K562 (cell line): ENCODE measurements at regions of chr13 and their contacts with region 1.

Region 1: DNA sequence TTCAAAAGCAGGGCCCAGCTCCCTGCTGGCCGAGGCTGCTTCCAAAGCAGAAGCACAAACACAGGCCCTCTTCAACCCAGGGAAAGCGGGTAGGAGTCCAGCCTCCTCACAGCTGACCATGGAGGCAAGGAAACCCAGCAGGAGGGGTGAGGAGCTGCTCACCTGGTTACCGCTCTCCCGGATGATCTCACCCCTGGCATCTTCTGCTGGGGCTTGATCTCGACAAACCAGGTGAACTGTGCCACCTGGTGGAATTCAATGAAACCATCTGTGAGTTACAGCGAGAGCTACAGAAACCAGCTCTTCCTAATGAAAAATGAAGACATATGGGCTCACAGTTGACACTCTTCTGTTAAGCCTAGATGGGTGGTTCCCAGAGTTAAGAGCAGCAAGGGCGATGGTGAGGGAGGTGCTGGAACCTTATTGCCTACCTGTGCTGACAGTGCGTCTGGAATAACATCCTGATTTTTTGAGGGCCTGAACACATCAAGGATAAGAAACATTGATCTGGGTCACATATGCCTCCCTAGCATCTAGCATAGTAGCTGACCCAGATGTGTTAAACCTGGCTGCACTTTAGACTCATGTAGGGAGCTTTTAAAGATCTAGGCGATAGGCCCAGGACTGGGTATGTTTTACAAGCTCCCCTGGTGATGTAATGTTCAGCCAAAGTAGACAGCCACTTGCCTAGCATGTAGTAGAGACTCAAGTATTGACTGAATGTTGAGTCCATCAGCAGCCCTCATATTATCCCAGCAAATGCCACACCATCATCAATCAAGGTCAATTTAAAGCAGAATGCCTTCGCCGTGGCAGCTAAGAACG is 6.1 kb downstream of the DHRS12 start:
- DNase-seq: peak in 2 of 4 experiments; percentile 26 to 62
- ATAC-seq: peak; percentile 75
- H3K4me3 ChIP-seq: no peak overlapping the region
- H3K27ac ChIP-seq: no peak overlapping the region
- H3K4me1 ChIP-seq: peaks cover 15% of the 10 kb centered on the region in 2 experiments; a peak in 4 of 5 replicates
- H3K27me3 ChIP-seq: peaks cover 0 to 5% of the 10 kb centered on the region in 2 experiments; a peak in 2 of 5 replicates
- CTCF ChIP-seq: peak; percentile 41 to 64 (median 48); a peak in 5 of 6 replicates
- EP300 ChIP-seq: no peak
- POLR2A ChIP-seq: no peak
- RAD21 ChIP-seq: peak; percentile 37 to 77; a peak in 3 of 4 replicates

Region 2: GRCh38 chr13:50713523-50714248 is 1084.2 kb before region 1 on chr13:
- CTCF ChIA-PET with region 1: no interaction called
- POLR2A ChIA-PET with region 1: no interaction called
- in situ Hi-C with region 1: no loop called
- intact Hi-C with region 1: no loop called
- DNase-seq: no peak
- ATAC-seq: no peak
- H3K4me3 ChIP-seq: no peak overlapping the region
- H3K27ac ChIP-seq: no peak overlapping the region
- H3K4me1 ChIP-seq: no peaks in the 10 kb centered on the region
- H3K27me3 ChIP-seq: peaks cover 0 to 17% of the 10 kb centered on the region in 2 experiments; a peak in 2 of 5 replicates
- CTCF ChIP-seq: no peak
- EP300 ChIP-seq: no peak
- POLR2A ChIP-seq: no peak
- RAD21 ChIP-seq: no peak

Region 3: DNA sequence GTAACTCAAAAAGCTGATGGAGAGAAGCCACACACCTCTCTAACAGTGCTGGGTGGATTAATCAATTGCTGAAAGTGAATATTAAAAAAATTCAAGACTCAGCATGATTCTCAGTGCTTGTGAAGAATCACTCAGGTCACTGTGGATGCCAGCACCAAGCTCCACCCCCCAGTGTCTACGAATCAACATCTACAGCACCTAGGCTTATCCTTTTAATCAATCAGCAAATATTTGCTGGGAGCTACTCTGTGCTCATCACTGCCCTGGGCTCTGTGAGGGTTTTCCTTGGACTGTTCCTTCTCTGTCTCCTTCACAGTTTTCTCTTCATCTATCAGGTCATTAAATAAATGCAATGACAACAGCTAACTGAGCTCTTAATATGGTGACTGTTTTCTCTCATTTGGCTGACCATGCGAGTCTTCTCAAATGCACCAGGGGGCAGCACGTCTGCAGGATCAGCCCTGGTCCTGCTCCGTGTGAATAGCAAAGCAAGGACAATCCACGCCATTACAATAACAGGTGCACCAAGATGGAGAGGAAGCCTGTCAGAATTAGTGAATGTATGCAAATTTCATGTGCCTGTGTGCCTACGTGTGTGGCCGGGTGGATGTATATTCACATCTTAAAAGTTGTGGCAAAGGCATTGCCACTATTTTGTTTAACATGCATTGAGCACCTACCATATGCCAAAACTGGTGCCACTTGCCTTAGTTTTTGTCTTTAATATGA is 672.2 kb before region 1 on chr13:
- CTCF ChIA-PET with region 1: no interaction called
- POLR2A ChIA-PET with region 1: no interaction called
- in situ Hi-C with region 1: loop called (anchors 10 kb)
- intact Hi-C with region 1: no loop called
- DNase-seq: peak; percentile 23 to 55 (median 34)
- ATAC-seq: peak; percentile 91
- H3K4me3 ChIP-seq: no peak overlapping the region
- H3K27ac ChIP-seq: no peak overlapping the region
- H3K4me1 ChIP-seq: no peaks in the 10 kb centered on the region
- H3K27me3 ChIP-seq: no peaks in the 10 kb centered on the region
- CTCF ChIP-seq: peak; percentile 70 to 73 (median 71)
- EP300 ChIP-seq: no peak
- POLR2A ChIP-seq: no peak
- RAD21 ChIP-seq: peak; percentile 67 to 81

Region 4: DNA sequence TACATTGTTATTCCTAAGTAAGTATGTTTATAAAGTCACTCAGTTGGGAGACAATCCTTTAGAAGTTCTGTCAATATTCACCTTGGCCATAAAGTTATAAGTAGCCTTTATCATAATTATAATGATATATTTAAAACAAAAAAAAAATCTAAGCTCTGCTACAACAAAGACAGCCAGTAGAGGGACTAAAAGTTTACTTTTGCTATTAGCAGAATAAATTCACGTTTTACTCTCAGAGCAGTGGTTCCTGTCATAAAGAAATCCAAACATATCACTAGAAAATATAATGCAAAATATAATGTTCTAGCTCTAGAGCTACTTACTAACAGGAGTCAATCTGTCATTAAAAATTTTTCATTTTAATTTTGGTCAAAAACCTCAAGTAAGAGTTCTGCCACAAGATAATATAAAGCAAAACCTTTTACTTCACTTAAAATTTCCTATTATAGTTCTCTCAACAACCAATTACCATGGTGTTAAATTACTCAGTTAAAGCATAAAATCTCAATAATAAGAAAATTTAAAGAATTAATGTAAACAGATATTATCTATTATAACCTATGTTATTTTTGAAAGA is 362.8 kb before region 1 on chr13:
- CTCF ChIA-PET with region 1: interaction called, 10 read pairs
- POLR2A ChIA-PET with region 1: interaction called, 3 read pairs
- in situ Hi-C with region 1: loop called (anchors 10 kb)
- intact Hi-C with region 1: loop called (anchors 5 kb)
- DNase-seq: no peak
- ATAC-seq: no peak
- H3K4me3 ChIP-seq: no peak overlapping the region
- H3K27ac ChIP-seq: no peak overlapping the region
- H3K4me1 ChIP-seq: no peaks in the 10 kb centered on the region; a peak in 1 of 5 replicates
- H3K27me3 ChIP-seq: no peaks in the 10 kb centered on the region
- CTCF ChIP-seq: peak in 2 of 3 experiments; percentile 20 to 58; a peak in 3 of 6 replicates
- EP300 ChIP-seq: no peak
- POLR2A ChIP-seq: no peak
- RAD21 ChIP-seq: peak; percentile 28 to 55; a peak in 2 of 4 replicates

Region 5: DNA sequence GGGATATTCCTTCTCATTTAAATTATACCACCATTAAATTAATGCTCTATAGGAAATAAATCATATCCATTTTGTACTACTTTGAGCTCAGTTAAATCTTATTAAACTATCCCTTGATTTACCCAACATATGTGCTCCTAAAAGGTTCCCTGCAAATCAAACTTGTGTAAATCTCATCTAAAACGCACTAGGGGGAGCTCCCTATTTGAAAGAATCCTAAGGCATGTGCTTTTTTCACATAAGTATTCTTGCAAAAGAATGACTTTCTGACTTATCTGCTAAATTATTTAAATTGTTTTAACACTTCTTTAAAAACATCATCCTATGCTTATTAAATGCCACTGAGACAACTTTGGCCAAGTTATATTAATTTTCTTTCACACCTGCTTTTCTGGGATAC is 353.0 kb before region 1 on chr13:
- CTCF ChIA-PET with region 1: no interaction called
- POLR2A ChIA-PET with region 1: interaction called, 5 read pairs
- in situ Hi-C with region 1: loop called (anchors 10 kb)
- intact Hi-C with region 1: loop called (anchors 2 kb)
- DNase-seq: peak in 1 of 4 experiments; percentile 4
- ATAC-seq: 0 out of 3 replicates have a peak, but pooled peaks have one; percentile 35
- H3K4me3 ChIP-seq: no peak overlapping the region
- H3K27ac ChIP-seq: no peak overlapping the region
- H3K4me1 ChIP-seq: peaks cover 0 to 7% of the 10 kb centered on the region in 2 experiments; a peak in 3 of 5 replicates
- H3K27me3 ChIP-seq: no peaks in the 10 kb centered on the region
- CTCF ChIP-seq: peak in 1 of 3 experiments; percentile 45; a peak in 2 of 6 replicates
- EP300 ChIP-seq: no peak
- POLR2A ChIP-seq: no peak
- RAD21 ChIP-seq: peak; percentile 24 to 55; a peak in 3 of 4 replicates

Region 6: GRCh38 chr13:51645154-51645650 is 152.7 kb before region 1 on chr13:
- CTCF ChIA-PET with region 1: no interaction called
- POLR2A ChIA-PET with region 1: no interaction called
- in situ Hi-C with region 1: no loop called
- intact Hi-C with region 1: no loop called
- DNase-seq: no peak
- ATAC-seq: no peak
- H3K4me3 ChIP-seq: no peak overlapping the region
- H3K27ac ChIP-seq: no peak overlapping the region
- H3K4me1 ChIP-seq: no peaks in the 10 kb centered on the region
- H3K27me3 ChIP-seq: no peaks in the 10 kb centered on the region
- CTCF ChIP-seq: no peak
- EP300 ChIP-seq: no peak
- POLR2A ChIP-seq: no peak
- RAD21 ChIP-seq: no peak

Region 7: DNA sequence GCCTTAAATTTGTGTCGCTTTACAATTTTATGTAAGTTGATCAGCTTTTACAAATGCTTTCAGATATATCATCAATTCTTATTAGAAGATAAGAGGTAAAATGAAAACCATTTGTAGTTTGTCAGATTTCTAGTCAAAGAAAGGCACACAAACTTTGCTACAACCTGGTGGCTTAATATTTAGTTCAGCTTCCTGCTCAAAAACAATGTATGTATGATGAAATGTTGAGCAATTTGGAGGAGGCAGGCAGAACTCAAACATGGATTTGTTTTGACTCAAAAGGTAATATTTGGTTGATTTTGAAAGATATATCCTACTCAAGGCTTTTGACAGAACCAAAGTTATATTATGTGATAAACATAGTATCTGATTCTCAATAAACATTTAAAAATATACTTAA is 306.7 kb after region 1 on chr13:
- CTCF ChIA-PET with region 1: no interaction called
- POLR2A ChIA-PET with region 1: no interaction called
- in situ Hi-C with region 1: no loop called
- intact Hi-C with region 1: no loop called
- DNase-seq: no peak
- ATAC-seq: peak; percentile 61; the same call in 2 of the 3 replicates
- H3K4me3 ChIP-seq: no peak overlapping the region
- H3K27ac ChIP-seq: no peak overlapping the region
- H3K4me1 ChIP-seq: no peaks in the 10 kb centered on the region; a peak in 1 of 5 replicates
- H3K27me3 ChIP-seq: no peaks in the 10 kb centered on the region
- CTCF ChIP-seq: no peak
- EP300 ChIP-seq: no peak
- POLR2A ChIP-seq: no peak
- RAD21 ChIP-seq: no peak